BJ (cell line): ENCODE measurements at regions of chr1 and their contacts with region 1.

Region 1: GRCh38 chr1:151401125-151401788 is 1.9 kb downstream of the PSMB4 start:
- DNase-seq: no peak
- H3K4me3 ChIP-seq: no peak overlapping the region
- H3K27me3 ChIP-seq: no peaks in the 10 kb centered on the region
- CTCF ChIP-seq: no peak

Region 2: GRCh38 chr1:151371366-151372060 is 29.7 kb before region 1 on chr1:
- CTCF ChIA-PET with region 1: no interaction called
- POLR2A ChIA-PET with region 1: interaction called, 13 read pairs
- DNase-seq: no peak
- H3K4me3 ChIP-seq: peak overlapping the region; percentile 39
- H3K27me3 ChIP-seq: 0 out of 2 replicates have a peak, but pooled peaks cover 1% of the 10 kb centered on the region
- CTCF ChIP-seq: no peak